Left cardiac atrium (tissue), 4 donors: ENCODE measurements at regions of chr14 and their contacts with region 1.

Region 1: DNA sequence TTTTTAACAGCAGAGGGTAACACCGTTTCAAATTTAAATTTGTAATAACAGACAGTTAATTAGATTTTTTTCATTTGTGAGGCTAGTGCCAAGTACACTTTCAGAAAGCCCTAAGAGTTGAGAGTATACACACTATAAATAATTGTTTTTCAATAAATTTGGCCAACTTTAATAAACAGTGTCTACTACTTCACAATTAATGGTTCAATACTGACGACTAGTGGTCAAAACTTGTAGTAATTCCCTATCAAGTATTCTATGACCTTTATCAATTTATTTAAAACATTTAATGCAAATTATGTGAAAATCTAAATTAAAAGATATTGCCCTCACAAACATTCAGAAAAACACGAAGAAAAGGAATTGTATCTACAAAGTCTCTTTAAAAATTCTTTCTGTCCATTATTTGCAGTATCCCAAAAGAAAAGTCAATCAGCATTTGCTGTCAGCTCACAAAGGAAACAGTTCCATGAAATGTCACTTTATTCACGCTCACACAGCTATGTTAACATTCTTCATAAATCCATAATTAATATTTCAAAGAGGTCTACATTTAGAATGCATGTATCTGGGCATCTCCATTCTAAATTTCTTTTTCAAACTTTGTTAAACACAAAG is 91.2 kb downstream of the CEP128 start:
- DNase-seq: no peak
- ATAC-seq: no peak

Region 2: DNA sequence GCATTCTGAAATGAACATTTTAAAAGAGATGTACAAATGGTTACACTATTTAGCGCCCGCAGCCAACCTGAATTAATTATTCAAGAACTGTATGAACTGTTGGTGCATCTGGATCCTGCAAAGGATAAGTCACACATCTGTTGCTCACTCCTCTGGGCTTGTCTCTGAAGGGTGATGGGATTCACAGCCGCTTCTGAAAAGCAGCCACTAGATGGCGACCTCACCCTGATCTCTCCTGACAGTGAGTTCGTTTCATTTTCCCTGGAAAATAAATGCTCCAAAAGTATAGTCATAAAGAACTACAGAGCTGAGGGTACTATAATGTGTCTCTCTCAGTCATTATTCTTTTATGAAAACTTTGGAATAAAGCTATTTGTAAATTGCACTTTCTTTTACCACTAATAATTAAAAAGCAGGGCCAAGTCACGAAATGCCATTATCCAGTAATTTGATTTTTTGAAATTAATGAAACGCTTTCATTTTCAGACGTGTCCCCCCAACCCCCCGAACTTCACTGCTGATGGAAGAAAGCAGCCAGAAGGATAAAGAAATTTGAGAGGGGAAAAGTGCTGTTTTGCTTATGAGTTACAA is 1890.5 kb before region 1 on chr14:
- intact Hi-C with region 1: loop called in 1 of 2 experiments (anchors 10 kb)
- DNase-seq: peak; percentile 68
- ATAC-seq: peak; percentile 70 to 72

Region 3: GRCh38 chr14:78967110-78967809 is 1883.0 kb before region 1 on chr14:
- intact Hi-C with region 1: loop called (anchors 5 to 10 kb)
- DNase-seq: no peak
- ATAC-seq: no peak

Region 4: DNA sequence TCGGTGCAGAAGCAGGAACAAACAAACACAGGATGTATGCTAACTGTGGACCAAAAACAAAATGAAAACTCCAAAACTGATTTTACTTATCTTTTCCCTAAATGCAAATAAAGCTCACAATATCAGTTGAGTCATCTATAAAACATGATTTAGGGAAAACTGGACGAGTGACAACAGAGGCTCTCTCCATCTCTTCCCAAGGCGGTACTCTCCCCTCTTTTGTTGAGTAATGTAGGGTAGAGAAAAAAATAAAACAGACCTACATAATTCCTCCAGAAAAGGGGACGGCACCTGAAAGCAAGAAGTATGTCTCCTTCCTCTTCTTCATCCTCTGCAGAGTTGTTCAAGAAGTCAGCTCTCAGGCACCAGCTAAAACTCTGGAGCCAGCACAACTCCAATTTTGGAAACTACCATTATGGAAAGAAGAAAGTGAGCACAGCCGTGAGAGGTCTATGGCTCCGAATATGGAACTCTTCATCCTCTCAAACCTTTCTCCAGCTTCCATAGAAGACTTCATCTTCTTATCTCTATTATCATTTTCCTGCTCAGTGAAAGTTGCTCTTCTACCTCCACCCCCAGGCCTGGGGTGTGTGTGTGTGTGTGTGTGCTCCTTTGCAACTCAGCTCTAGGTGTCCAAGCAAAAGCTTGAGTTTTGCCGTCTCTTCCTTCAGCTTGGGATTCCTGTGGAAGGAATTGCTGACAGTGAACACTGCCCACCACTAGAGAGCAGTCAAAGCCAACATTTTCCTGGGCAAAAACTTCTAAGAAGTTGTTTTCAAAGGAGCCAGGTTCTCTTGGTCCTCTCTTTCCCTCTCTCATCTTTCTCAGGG is 794.4 kb before region 1 on chr14:
- intact Hi-C with region 1: loop called (anchors 2 to 5 kb)
- DNase-seq: peak; percentile 19
- ATAC-seq: peak; percentile 54 to 72

Region 5: GRCh38 chr14:80664576-80664975 is 185.7 kb before region 1 on chr14:
- intact Hi-C with region 1: no loop called
- DNase-seq: no peak
- ATAC-seq: no peak

Region 6: GRCh38 chr14:80954687-80955299 is 104.5 kb after region 1 on chr14:
- intact Hi-C with region 1: no loop called
- DNase-seq: peak; percentile 79
- ATAC-seq: peak; percentile 94 to 96